ENCODE measurements at regions of chr12 and their contacts with region 1.

Region 1: DNA sequence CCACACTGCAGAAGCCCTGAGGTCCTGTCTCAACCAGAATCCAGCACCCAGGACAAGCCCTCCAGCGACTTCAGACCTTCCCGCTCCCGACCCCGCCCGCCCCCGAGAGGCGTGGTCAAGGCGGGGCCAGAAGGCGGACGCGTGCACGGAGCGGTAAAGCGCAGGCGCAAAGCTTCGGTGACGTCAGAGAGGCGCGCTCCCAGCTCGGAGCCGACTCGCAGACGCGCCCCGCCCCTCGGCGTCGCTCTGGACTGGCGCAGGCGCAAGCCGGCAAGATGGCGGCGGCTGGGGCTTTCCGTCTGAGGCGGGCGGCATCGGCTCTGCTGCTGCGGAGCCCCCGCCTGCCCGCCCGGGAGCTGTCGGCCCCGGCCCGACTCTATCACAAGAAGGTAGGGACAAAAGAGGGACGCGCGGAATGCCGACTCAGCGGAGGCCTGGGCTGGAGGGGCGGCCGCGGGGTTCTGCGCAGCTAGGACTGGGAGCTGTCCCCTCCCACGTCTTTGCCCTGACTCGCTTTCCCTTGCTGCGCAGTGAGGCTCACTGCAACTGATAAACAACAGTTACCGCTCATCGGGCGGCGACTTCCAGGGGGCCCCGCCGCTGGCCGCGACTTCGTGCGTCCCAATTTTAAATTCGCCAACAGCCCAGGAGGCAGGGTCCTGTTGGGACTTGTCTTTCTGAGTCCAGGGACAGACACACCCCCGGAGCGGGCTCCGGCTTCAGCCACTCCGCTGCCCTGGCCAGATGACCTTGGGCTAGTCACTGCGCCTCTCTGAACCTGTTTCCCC is at the start of gene ISCU:
- DNase-seq: peak; percentile 96 to 99
- H3K4me3 ChIP-seq: peak within 1 kb of the TSS; percentile 67 to 91
- H3K27ac ChIP-seq: peak within 1 kb of the TSS; percentile 92 to 96
- H3K4me1 ChIP-seq: peaks cover 0 to 14% of the 10 kb centered on the region in 2 donors
- H3K27me3 ChIP-seq: no peaks in the 10 kb centered on the region
- CTCF ChIP-seq: peak in 1 of 4 experiments; percentile 23
- POLR2A ChIP-seq: peak; percentile 85 to 96
- total RNA-seq, gene ISCU: 81.3 to 226 (median 161) TPM

Region 2: DNA sequence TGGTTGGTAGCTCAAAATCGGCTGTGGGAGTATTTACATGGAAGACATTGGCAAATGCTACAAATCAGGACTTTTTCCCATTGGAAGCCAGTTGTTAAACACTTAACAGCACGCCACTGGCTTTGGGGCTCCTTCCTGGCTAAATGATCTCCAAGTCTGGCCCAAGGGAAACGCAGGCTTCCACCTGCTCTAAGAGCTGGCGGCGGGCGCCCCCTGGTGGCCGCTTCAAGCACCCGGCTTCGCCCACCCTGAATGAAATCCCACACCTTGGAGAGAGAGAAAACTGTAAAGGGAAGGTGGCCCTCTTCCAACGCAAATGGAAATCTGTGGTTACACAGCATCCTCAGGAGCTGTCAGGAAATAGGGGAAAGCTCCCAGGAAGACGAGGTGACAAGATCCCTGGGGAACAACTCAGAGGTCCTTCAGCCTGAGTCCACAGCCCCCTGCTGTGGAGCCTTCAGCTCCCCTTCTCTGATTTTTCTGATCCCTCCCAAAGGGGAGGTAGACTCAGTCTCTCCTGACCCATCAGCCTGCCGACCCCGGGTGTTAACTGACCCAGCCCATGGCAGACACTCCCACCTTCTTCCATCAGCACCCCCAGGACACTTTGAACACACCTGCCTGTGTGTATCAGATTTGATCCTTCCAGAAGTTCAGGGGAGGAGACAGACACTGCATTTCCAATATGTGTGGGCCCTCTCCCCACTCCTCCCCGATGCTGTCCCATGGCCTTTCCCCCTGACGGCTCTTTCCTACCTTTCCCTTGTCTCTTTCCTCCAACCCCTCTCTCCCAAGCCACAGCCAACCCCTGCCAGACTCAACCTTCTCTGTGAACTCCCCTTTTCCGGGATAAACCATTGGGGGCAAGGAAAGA is 55.8 kb after region 1 on chr12:
- intact Hi-C with region 1: loop called (anchors 5 kb)
- DNase-seq: peak; percentile 80 to 83
- H3K4me3 ChIP-seq: no peak overlapping the region
- H3K27ac ChIP-seq: no peak overlapping the region
- H3K4me1 ChIP-seq: no peaks in the 10 kb centered on the region
- H3K27me3 ChIP-seq: no peaks in the 10 kb centered on the region
- CTCF ChIP-seq: peak; percentile 90 to 98 (median 92)
- POLR2A ChIP-seq: no peak

Region 3: DNA sequence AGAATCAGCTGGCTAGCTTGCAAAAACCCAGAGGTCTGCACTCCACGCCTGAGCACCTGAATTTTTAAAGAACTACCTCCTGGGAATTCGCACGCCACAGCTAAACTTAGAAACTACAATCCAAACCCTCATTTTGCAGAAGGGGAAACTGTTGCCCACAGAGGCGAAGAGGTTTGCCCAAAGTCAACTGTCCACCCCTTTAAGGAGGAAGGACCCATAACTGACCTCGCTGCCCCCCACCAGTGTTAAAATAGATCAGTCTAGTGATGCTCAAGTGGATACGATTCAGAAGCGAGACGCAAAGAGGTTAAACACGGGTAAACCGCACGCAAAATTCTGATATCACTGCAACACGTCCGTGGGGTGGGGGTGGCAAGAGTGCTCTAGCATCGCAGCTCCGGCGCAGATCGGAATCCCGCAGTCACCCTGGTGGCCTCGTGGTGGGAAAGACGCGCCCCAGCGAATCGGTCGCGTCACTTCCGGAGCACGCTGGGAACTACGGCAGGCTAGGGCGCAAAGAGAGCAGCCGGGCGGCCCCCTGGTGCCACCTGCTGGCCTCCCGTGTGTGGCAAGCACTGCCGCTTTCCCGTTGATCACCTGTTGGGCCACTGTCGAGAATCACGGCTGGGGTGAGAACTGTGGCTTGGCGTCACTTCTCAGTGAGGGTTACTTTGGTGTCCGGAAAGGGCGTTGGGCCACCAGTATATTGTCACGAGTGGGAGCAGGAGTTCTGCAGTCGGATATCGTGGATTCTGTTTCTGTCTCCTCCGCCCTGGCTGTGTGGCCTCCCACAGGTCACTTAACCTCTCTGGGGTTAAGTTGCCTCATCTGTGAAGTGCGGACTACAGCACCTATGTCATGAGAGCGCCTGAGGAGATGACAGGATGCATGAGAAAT is 530.7 kb after region 1 on chr12 and contains the start of gene ALKBH2:
- intact Hi-C with region 1: loop called (anchors 10 kb)
- DNase-seq: peak; percentile 90 to 92
- H3K4me3 ChIP-seq: peak within 1 kb of the TSS; percentile 49 to 50
- H3K27ac ChIP-seq: peak within 1 kb of the TSS; percentile 62 to 78
- H3K4me1 ChIP-seq: peaks cover 10 to 17% of the 10 kb centered on the region in 2 donors
- H3K27me3 ChIP-seq: no peaks in the 10 kb centered on the region
- CTCF ChIP-seq: peak; percentile 97 to 99 (median 98)
- POLR2A ChIP-seq: peak; percentile 17 to 49
- total RNA-seq, gene ALKBH2: 2.1 to 26.5 (median 19.1) TPM